Common myeloid progenitor, CD34-positive (primary cell): ENCODE measurements at regions of chr5 and their contacts with region 1.

Region 1: GRCh38 chr5:139262742-139263445 is 30.6 kb upstream of the MATR3 start:
- DNase-seq: peak in 2 of 3 donors; percentile 36 to 58
- H3K4me3 ChIP-seq: no peak overlapping the region
- H3K27ac ChIP-seq: peak overlapping the region in 1 of 2 experiments; percentile 34
- H3K4me1 ChIP-seq: peaks cover 16 to 61% (median 31%) of the 10 kb centered on the region in 4 experiments
- H3K27me3 ChIP-seq: no peaks in the 10 kb centered on the region

Region 2: DNA sequence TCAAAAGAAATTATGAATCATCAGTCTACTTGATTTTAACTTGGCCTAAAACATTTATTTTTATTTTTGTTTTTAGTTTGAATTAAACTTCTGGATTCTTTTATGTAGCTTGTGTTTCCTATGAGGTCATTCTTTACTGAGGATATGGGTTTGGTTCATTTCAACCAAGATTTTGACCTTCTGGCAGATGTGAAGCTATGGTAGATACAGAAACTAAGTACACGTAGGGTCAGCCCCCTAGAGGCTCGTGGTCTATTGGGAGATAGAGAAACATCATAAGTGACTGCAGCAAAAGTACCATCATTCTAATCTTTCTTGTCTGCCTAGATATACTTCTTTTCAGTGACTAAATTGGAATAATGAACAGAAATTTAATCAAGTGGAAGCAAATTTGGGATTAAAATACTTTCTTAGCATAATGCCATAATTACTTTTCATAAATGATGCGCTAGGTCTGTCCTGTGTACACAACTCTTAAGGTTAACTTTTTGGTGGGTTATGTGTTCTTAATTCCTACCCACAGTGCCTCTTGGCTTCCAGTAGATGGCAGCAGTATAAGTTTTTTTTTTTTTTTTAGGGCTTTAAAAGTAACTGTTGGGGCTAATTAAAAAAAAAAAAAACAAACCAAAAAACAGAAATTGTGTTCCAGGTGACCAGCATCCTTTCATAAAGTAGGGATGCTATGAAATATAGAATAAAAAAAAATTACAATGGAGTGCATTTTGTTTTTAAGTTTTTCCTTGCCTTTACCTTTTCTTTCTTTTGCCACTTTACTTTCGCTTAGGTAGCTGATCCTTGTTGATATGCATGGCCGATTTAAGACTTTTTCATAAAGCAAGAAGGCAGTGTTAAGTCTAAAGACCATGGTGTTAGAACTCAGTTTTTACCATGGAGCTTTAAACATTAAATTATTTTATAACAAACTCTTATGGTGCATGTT is 437.7 kb before region 1 on chr5:
- CTCF ChIA-PET with region 1: interaction called, 13 read pairs
- POLR2A ChIA-PET with region 1: no interaction called
- DNase-seq: peak; percentile 24 to 44 (median 36)
- H3K4me3 ChIP-seq: no peak overlapping the region
- H3K27ac ChIP-seq: no peak overlapping the region
- H3K4me1 ChIP-seq: peaks cover 0 to 6% (median 0%) of the 10 kb centered on the region in 4 experiments
- H3K27me3 ChIP-seq: no peaks in the 10 kb centered on the region

Region 3: DNA sequence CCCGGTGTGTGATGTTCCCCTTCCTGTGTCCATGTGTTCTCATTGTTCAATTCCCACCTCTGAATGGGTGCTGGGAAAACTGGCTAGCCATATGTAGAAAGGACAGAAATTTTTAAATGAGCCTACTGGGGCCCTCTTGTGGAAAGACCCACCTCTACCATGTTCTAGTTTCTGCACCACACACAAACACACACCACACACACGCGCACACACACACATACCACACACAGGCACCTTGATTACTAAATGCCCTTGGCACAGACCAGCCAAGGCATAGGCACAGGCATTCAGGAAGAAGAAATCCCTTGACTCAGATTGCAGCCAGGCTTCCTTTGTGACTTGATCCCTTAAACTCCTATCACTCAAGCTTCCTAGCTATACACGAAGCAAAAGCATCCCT is 125.2 kb before region 1 on chr5:
- CTCF ChIA-PET with region 1: interaction called, 16 read pairs
- POLR2A ChIA-PET with region 1: interaction called, 4 read pairs
- DNase-seq: peak; percentile 43 to 64 (median 57)
- H3K4me3 ChIP-seq: no peak overlapping the region
- H3K27ac ChIP-seq: no peak overlapping the region
- H3K4me1 ChIP-seq: peaks cover 0 to 48% (median 40%) of the 10 kb centered on the region in 4 experiments
- H3K27me3 ChIP-seq: no peaks in the 10 kb centered on the region

Region 4: DNA sequence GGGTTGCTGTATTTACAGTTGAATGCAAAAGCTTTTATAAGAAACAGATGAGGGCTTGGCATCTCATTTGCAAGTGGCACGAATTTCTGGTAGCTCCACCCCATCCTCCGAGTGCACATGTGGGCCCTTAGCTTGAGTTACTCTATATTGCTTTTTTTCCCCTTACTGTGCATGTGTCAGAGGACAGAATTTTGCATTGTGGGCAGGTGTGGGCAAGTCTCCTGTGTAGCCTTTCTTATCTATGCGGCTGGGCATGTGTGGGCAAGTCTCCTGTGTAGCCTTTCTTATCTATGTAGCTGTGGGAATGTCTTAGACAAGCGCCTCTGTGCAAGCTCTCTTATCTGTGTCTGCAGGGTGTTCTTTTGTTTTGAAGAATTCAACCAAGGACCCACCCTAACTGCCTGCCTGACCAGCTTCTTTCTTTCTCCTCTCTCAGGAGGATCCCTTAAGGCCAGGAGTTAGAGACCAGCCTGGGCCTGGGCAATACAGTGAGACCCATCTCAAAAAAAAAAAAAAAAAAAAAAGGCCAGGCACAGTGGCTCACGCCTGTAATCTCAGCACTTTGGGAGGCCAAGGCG is 30.7 kb before region 1 on chr5:
- CTCF ChIA-PET with region 1: no interaction called
- POLR2A ChIA-PET with region 1: no interaction called
- DNase-seq: peak; percentile 25 to 73 (median 42)
- H3K4me3 ChIP-seq: no peak overlapping the region
- H3K27ac ChIP-seq: no peak overlapping the region
- H3K4me1 ChIP-seq: no peaks in the 10 kb centered on the region
- H3K27me3 ChIP-seq: no peaks in the 10 kb centered on the region

Region 5: DNA sequence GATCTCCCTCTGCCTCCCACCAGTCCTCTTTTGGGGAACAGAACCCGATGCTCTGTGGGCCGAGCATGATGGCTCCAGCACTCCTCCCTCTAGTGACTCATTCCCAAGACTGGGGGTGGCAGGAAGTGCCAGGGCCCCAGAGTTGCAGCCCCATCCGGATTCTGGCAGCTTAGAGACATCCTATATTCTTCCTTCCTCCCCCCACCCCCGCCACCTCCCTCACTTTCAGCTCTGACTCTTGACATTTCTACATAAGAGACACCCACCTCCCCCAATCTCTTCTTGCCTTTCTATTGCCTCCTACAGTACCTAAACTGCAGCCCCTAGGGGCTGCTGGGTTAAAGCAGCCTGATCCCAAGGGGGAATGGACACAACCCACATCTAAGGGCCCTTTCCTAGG is 16.5 kb before region 1 on chr5:
- CTCF ChIA-PET with region 1: interaction called, 23 read pairs
- POLR2A ChIA-PET with region 1: interaction called, 11 read pairs
- DNase-seq: peak; percentile 77 to 94 (median 90)
- H3K4me3 ChIP-seq: peak overlapping the region in 2 of 7 experiments; percentile 49 to 50
- H3K27ac ChIP-seq: peak overlapping the region; percentile 42 to 83
- H3K4me1 ChIP-seq: peaks cover 6 to 36% (median 31%) of the 10 kb centered on the region in 4 experiments
- H3K27me3 ChIP-seq: no peaks in the 10 kb centered on the region

Region 6: GRCh38 chr5:139273572-139274289 is 10.8 kb after region 1 on chr5:
- CTCF ChIA-PET with region 1: interaction called, 12 read pairs
- POLR2A ChIA-PET with region 1: interaction called, 3 read pairs
- DNase-seq: peak; percentile 86 to 92 (median 90)
- H3K4me3 ChIP-seq: peak overlapping the region; percentile 40 to 97 (median 69)
- H3K27ac ChIP-seq: peak overlapping the region; percentile 27 to 80
- H3K4me1 ChIP-seq: peaks cover 17 to 73% (median 66%) of the 10 kb centered on the region in 4 experiments
- H3K27me3 ChIP-seq: no peaks in the 10 kb centered on the region

Region 7: GRCh38 chr5:140547508-140548299 is 1284.8 kb after region 1 on chr5 and contains the start of gene EIF4EBP3:
- CTCF ChIA-PET with region 1: no interaction called
- POLR2A ChIA-PET with region 1: no interaction called
- DNase-seq: peak; percentile 89 to 95 (median 94)
- H3K4me3 ChIP-seq: peak within 1 kb of the TSS; percentile 16 to 88 (median 62)
- H3K27ac ChIP-seq: peak within 1 kb of the TSS; percentile 42 to 83
- H3K4me1 ChIP-seq: peaks cover 8 to 34% (median 27%) of the 10 kb centered on the region in 4 experiments
- H3K27me3 ChIP-seq: no peaks in the 10 kb centered on the region